ENCODE measurements at regions of chr11 and their contacts with region 1.

Region 1: DNA sequence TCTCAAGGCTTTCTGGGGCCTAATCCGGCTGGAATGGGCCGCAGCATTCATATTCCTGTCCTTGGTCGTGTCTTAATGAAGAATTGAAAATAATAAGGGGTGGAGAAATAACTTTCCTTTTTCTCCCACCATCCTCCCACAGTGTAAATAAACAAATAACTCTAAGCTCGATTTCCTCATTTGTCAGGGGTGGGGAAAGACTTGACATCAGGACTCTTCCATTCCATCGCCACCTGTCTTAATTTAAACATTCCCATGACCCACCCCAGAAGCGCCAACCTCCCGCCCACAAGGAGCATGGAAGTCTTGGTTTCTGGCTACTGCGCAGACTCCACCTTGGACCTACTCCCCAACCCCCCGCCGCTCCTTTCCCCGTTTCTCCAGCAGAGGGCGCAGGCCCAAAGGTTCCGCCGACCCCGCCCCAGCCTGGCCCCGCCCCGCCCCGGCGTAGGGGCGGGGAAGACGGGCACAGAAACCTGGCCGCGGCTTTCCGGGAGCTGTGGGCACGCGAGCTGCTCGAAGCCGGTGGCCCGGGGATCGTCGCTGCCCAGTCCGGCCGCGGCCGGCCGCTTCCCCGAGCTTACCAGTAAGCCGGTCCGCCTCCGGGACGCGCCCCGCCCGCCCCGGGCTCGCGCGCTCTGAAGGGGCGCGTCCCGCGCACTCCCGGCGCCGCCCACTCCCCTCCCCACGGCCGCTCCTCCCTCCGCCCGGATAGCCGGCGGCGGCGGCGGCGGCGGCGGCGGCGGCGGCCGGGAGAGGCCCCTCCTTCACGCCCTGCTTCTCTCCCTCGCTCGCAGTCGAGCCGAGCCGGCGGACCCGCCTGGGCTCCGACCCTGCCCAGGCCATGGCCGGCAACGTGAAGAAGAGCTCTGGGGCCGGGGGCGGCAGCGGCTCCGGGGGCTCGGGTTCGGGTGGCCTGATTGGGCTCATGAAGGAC is at the start of gene CBL:
- DNase-seq: peak; percentile 94 to 97
- ATAC-seq: peak; percentile 91 to 98 (median 92)
- H3K4me3 ChIP-seq: peak within 1 kb of the TSS; percentile 100
- H3K4me3 Mint-ChIP-seq: peak within 1 kb of the TSS; percentile 95
- H3K27ac ChIP-seq: peak within 1 kb of the TSS; percentile 79
- H3K27ac Mint-ChIP-seq: peak within 1 kb of the TSS; percentile 81 to 87
- H3K4me1 ChIP-seq: peaks cover 12% of the 10 kb centered on the region
- H3K4me1 Mint-ChIP-seq: peaks cover 13 to 21% of the 10 kb centered on the region in 2 donors
- H3K27me3 ChIP-seq: no peaks in the 10 kb centered on the region
- H3K27me3 Mint-ChIP-seq: no peaks in the 10 kb centered on the region
- CTCF ChIP-seq: peak; percentile 78
- total RNA-seq, gene CBL: 29.0 to 32.5 (median 30.1) TPM

Region 2: DNA sequence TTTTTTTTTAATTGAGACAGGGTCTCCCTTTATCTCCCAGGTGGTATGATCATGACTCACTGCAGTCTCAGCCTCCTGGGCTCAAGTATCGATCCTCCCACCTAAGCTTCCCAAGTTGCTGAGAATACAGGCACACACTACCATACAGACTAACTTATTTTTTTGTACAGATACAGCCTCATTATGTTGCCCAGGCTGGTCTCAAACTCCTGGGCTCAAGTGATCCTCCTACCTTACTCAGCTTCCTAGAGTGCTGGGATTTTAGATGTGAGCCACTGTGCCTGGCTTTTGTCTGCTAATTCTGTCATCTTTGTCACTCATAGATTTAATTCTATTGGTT is 43.8 kb after region 1 on chr11:
- intact Hi-C with region 1: no loop called
- DNase-seq: no peak
- ATAC-seq: no peak
- H3K4me3 ChIP-seq: no peak overlapping the region
- H3K4me3 Mint-ChIP-seq: no peak overlapping the region
- H3K27ac ChIP-seq: no peak overlapping the region
- H3K27ac Mint-ChIP-seq: no peak overlapping the region
- H3K4me1 ChIP-seq: no peaks in the 10 kb centered on the region
- H3K4me1 Mint-ChIP-seq: peaks cover 14 to 24% of the 10 kb centered on the region in 2 donors
- H3K27me3 ChIP-seq: no peaks in the 10 kb centered on the region
- H3K27me3 Mint-ChIP-seq: no peaks in the 10 kb centered on the region
- CTCF ChIP-seq: no peak

Region 3: DNA sequence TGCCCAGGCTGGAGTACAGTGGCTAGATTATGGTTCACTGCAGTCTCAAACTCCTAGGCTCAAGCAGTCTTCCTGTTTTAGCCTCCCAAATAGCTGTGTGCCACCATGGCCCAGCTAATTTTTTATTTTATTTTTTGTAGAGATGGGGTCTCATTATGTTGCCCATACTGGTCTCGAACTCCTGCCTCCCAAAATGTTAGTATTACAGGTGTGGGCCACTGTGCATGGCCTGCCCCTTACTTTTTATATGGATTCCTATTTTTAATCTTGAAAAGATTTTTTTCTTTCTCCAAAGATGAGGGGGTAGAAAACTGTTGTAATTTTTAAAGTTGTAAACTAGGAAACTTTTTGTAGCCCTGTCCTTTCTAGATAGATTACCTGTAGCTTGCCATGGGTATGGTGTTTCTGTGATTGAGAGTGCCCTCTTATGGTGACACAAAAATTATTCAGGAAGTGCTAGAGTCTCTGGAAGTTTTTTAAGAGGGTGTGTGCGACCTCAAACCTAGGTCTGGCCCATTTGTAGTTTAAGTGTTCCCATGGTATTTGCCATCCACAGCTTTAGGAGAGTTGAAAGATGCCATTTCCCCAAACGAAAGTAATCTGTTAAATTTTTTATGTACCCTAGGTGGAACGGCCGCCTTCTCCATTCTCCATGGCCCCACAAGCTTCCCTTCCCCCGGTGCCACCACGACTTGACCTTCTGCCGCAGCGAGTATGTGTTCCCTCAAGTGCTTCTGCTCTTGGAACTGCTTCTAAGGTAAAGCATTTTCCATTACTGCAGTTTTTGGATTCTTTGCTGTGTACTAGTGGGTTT is 78.7 kb after region 1 on chr11:
- intact Hi-C with region 1: loop called (anchors 5 kb)
- DNase-seq: peak in 1 of 2 donors; percentile 77
- ATAC-seq: peak; percentile 57 to 64 (median 57)
- H3K4me3 ChIP-seq: no peak overlapping the region
- H3K4me3 Mint-ChIP-seq: no peak overlapping the region
- H3K27ac ChIP-seq: no peak overlapping the region
- H3K27ac Mint-ChIP-seq: no peak overlapping the region
- H3K4me1 ChIP-seq: peaks cover 15% of the 10 kb centered on the region
- H3K4me1 Mint-ChIP-seq: peaks cover 13 to 20% of the 10 kb centered on the region in 2 donors
- H3K27me3 ChIP-seq: no peaks in the 10 kb centered on the region
- H3K27me3 Mint-ChIP-seq: no peaks in the 10 kb centered on the region
- CTCF ChIP-seq: no peak

Region 4: DNA sequence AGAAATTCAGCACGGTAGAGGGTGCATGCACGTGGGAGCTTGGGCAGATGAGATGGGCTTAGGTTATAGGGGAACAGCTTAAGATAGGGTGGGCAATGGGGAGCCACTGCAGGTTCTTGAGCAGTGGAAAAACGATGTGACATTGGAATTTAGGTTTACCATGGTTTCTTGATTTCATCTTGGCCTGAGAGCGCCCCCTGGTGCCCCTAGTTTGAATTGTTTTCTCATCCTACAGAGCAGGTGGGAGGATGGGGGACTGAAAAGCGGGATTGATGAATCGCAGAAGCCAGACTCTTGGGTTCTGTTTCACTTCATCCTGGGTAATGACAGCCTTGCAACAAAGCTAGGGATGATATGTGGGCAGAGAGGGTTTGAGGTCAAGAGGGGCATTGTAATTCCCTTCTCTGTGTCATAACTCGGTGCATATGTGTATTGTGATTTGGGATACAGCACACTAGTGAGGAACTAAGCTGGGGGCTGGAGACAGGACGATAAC is 117.7 kb after region 1 on chr11:
- intact Hi-C with region 1: loop called (anchors 5 kb)
- DNase-seq: peak; percentile 72 to 85
- ATAC-seq: peak in 1 of 3 donors; percentile 31
- H3K4me3 ChIP-seq: no peak overlapping the region
- H3K4me3 Mint-ChIP-seq: peak overlapping the region; percentile 59
- H3K27ac ChIP-seq: no peak overlapping the region
- H3K27ac Mint-ChIP-seq: no peak overlapping the region
- H3K4me1 ChIP-seq: peaks cover 18% of the 10 kb centered on the region
- H3K4me1 Mint-ChIP-seq: peaks cover 0 to 31% of the 10 kb centered on the region in 2 donors
- H3K27me3 ChIP-seq: peaks cover 5% of the 10 kb centered on the region
- H3K27me3 Mint-ChIP-seq: peaks cover 17 to 23% of the 10 kb centered on the region in 2 donors
- CTCF ChIP-seq: peak; percentile 80